CD14-positive monocyte (primary cell): ENCODE measurements at regions of chr11 and their contacts with region 1.

Region 1: GRCh38 chr11:2532704-2533586 is 88.1 kb downstream of the KCNQ1 start:
- DNase-seq: peak; percentile 80 to 89 (median 85)
- H3K4me3 ChIP-seq: peak overlapping the region in 2 of 3 experiments; percentile 25 to 71
- H3K4me3 Mint-ChIP-seq: peak overlapping the region; percentile 71 to 91
- H3K27ac ChIP-seq: peak overlapping the region; percentile 15 to 63
- H3K27ac Mint-ChIP-seq: peak overlapping the region; percentile 6 to 91 (median 89)
- H3K4me1 ChIP-seq: peaks cover 31 to 39% of the 10 kb centered on the region in 2 donors
- H3K4me1 Mint-ChIP-seq: peaks cover 38% of the 10 kb centered on the region
- H3K27me3 ChIP-seq: no peaks in the 10 kb centered on the region
- H3K27me3 Mint-ChIP-seq: peaks cover 3 to 16% (median 4%) of the 10 kb centered on the region in 3 donors
- CTCF ChIP-seq: peak; percentile 97

Region 2: GRCh38 chr11:2298795-2299761 is 233.9 kb before region 1 on chr11:
- intact Hi-C with region 1: loop called in 1 of 2 experiments (anchors 5 kb)
- DNase-seq: peak in 1 of 3 donors; percentile 8
- H3K4me3 ChIP-seq: peak overlapping the region in 1 of 3 experiments; percentile 52
- H3K4me3 Mint-ChIP-seq: peak overlapping the region in 1 of 2 donors; percentile 76
- H3K27ac ChIP-seq: peak overlapping the region in 1 of 2 donors; percentile 43
- H3K27ac Mint-ChIP-seq: peak overlapping the region in 4 of 7 donors; percentile 6 to 76 (median 30)
- H3K4me1 ChIP-seq: peaks cover 41 to 53% of the 10 kb centered on the region in 2 donors
- H3K4me1 Mint-ChIP-seq: peaks cover 59% of the 10 kb centered on the region
- H3K27me3 ChIP-seq: no peaks in the 10 kb centered on the region
- H3K27me3 Mint-ChIP-seq: peaks cover 0 to 3% (median 0%) of the 10 kb centered on the region in 3 donors
- CTCF ChIP-seq: no peak

Region 3: GRCh38 chr11:2428322-2428795 is 104.6 kb before region 1 on chr11:
- intact Hi-C with region 1: loop called (anchors 1 kb)
- DNase-seq: peak; percentile 72 to 80 (median 74)
- H3K4me3 ChIP-seq: no peak overlapping the region
- H3K4me3 Mint-ChIP-seq: no peak overlapping the region
- H3K27ac ChIP-seq: no peak overlapping the region
- H3K27ac Mint-ChIP-seq: no peak overlapping the region
- H3K4me1 ChIP-seq: no peaks in the 10 kb centered on the region
- H3K4me1 Mint-ChIP-seq: no peaks in the 10 kb centered on the region
- H3K27me3 ChIP-seq: no peaks in the 10 kb centered on the region
- H3K27me3 Mint-ChIP-seq: peaks cover 0 to 8% (median 7%) of the 10 kb centered on the region in 3 donors
- CTCF ChIP-seq: peak; percentile 91

Region 4: DNA sequence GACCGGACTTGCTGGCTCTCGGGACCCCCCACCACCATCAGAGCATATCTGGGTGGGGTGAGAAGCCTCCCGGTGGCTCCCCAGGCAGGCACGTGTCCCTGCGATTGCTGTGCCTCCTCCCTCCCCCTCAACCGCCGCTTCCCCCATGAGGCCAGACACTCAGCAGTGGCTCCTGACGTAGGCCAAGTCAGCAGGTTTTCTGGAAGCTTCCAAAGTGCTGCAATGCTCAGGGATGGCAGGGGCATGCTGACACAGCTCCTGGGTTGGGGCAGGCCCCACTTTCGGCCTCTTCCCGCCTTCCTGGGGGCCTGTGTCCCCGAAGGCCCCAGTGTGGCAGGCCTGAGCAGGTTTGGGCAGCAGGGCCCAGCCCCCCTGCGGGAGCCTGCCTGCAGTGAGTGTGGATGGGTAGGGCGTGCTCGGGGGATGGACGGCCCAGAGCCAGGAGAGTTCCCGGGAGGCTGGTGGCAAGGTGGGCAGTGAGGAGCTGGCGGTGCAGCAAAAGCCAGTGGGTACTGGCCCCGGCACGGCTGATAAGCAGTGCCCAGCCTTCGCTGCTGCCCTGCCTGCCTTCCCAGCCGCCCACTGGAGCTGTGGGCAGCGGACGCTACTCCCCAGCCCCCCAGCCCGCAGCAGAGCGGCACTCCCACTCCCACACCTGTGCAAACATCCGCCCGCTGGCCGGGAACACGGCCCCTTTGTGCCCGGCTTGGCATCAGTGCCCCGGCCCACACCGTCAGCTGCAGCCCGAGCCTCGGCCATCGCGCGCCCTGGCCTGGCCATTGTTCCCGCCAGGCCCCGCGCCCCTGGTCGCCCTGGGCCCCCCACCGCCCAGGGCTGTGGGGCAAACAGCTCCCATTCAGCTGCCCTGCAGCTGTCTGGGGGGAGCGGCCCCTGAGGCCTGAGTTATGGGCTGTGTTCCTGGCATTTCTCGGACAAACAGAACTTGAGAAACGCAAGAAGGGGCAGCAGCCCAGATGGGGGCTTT is 41.9 kb after region 1 on chr11:
- intact Hi-C with region 1: no loop called
- DNase-seq: no peak
- H3K4me3 ChIP-seq: no peak overlapping the region
- H3K4me3 Mint-ChIP-seq: no peak overlapping the region
- H3K27ac ChIP-seq: no peak overlapping the region
- H3K27ac Mint-ChIP-seq: no peak overlapping the region
- H3K4me1 ChIP-seq: no peaks in the 10 kb centered on the region
- H3K4me1 Mint-ChIP-seq: no peaks in the 10 kb centered on the region
- H3K27me3 ChIP-seq: no peaks in the 10 kb centered on the region
- H3K27me3 Mint-ChIP-seq: peaks cover 0 to 3% (median 0%) of the 10 kb centered on the region in 3 donors
- CTCF ChIP-seq: no peak

Region 5: DNA sequence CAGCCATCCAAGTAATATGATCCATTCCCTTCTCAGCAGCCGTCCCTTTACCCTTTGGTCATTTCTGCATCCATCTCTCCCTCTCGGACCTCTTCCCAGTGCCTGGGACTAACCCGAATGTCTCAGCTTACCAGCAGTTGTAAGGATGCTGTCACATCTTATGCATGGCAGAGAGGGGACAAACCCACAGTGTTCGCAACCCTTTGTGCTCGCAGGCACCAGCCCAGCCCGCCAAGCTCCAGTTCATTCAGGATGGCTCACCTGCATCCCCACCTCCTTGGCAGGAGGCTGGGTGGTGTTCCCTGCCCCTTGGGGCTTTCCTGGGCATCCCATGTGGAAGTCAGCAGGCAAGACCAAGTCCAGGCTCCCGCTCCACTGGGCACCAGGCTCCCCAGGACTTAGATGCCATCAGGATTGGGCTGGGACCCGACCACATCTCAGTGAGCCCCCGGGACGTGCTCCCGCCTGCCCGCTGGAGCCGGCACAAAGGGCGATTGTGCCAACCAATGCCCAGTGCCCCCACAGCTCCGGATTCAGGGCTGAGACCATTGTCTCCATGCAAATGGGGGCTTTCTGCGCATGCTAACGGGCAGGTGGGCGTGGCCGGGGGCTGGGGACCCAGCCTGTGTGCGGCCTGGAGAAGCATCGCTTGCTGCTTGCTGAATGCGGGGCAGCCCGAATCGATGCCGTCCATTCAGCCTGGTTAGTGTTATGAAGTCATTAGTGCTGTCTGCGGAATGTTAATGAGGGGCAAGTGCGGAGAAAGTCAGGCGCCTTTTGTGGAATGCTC is 58.2 kb after region 1 on chr11:
- intact Hi-C with region 1: no loop called
- DNase-seq: peak in 1 of 3 donors; percentile 1
- H3K4me3 ChIP-seq: no peak overlapping the region
- H3K4me3 Mint-ChIP-seq: no peak overlapping the region
- H3K27ac ChIP-seq: no peak overlapping the region
- H3K27ac Mint-ChIP-seq: no peak overlapping the region
- H3K4me1 ChIP-seq: no peaks in the 10 kb centered on the region
- H3K4me1 Mint-ChIP-seq: no peaks in the 10 kb centered on the region
- H3K27me3 ChIP-seq: no peaks in the 10 kb centered on the region
- H3K27me3 Mint-ChIP-seq: peaks cover 0 to 3% (median 0%) of the 10 kb centered on the region in 3 donors
- CTCF ChIP-seq: no peak

Region 6: DNA sequence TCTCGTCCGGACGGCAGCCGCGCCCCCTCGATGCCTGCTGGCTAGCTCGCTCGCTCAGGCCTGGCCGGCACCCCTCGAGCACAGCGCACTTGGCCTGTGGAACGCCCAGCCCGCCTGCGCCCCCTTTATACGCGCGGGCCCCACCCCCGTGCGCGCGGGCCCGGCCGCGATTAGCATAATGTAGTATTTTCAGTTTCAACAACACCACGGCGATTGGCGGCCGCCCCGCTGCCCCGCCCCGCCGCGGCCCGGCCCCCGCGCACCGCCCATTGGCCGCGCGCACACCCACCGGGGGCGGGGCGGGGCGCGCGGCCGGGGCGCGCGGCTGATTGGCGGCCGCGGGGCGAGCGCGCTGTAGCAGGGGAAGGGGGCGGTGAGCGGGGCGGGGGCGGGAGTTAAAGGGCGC is 352.7 kb after region 1 on chr11 and contains the start of gene CDKN1C:
- intact Hi-C with region 1: loop called (anchors 1 to 2 kb)
- DNase-seq: peak; percentile 60 to 75 (median 74)
- H3K4me3 ChIP-seq: peak within 1 kb of the TSS; percentile 59 to 89 (median 69)
- H3K4me3 Mint-ChIP-seq: peak within 1 kb of the TSS; percentile 92 to 97
- H3K27ac ChIP-seq: no peak within 1 kb of the TSS
- H3K27ac Mint-ChIP-seq: peak within 1 kb of the TSS in 5 of 7 donors; percentile 24 to 82 (median 79)
- H3K4me1 ChIP-seq: peaks cover 14 to 28% of the 10 kb centered on the region in 2 donors
- H3K4me1 Mint-ChIP-seq: peaks cover 16% of the 10 kb centered on the region
- H3K27me3 ChIP-seq: peaks cover 11 to 48% of the 10 kb centered on the region in 2 donors
- H3K27me3 Mint-ChIP-seq: peaks cover 37 to 66% (median 43%) of the 10 kb centered on the region in 3 donors
- CTCF ChIP-seq: no peak
- polyA plus RNA-seq, gene CDKN1C: 3.2 to 36.4 (median 4.7) TPM

Region 7: DNA sequence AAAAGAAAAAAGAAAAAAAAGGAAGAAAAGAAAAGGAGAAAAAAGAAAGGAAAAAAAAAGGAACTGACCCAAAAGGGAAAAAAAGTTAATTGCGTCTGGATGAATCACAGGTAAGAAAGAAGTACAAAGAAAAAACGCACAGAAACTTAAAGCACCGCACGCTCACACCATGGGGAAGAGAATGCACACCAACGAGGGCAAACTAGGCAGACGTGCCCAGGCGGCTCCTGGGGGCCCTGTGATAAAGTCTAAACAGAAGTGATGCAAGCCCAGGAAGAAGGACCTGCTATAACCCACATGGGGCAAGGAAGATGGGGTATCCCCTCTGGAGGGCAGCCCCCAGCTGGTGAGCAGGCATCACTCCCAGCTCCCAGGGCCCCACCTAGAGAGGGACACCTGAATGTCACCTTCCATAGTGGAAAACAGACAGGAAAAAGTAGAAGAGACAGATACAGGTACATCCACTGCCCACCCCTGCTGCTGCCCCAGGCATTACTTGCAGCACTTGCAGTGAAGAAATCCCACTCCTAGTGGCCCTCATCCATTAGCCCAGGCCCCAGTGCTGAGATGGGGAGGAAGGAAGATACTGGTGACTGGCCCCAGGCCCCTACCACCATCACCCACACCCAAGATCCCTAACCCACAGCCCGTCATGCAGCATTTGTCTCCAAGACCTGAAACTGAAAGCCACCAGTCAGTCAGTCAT is 430.3 kb after region 1 on chr11:
- intact Hi-C with region 1: loop called in 1 of 2 experiments (anchors 10 kb)
- DNase-seq: peak in 1 of 3 donors; percentile 22
- H3K4me3 ChIP-seq: no peak overlapping the region
- H3K4me3 Mint-ChIP-seq: no peak overlapping the region
- H3K27ac ChIP-seq: peak overlapping the region; percentile 29 to 52
- H3K27ac Mint-ChIP-seq: peak overlapping the region; percentile 56 to 89 (median 68)
- H3K4me1 ChIP-seq: peaks cover 30 to 42% of the 10 kb centered on the region in 2 donors
- H3K4me1 Mint-ChIP-seq: peaks cover 36% of the 10 kb centered on the region
- H3K27me3 ChIP-seq: no peaks in the 10 kb centered on the region
- H3K27me3 Mint-ChIP-seq: peaks cover 0 to 1% (median 0%) of the 10 kb centered on the region in 3 donors
- CTCF ChIP-seq: no peak

Region 8: DNA sequence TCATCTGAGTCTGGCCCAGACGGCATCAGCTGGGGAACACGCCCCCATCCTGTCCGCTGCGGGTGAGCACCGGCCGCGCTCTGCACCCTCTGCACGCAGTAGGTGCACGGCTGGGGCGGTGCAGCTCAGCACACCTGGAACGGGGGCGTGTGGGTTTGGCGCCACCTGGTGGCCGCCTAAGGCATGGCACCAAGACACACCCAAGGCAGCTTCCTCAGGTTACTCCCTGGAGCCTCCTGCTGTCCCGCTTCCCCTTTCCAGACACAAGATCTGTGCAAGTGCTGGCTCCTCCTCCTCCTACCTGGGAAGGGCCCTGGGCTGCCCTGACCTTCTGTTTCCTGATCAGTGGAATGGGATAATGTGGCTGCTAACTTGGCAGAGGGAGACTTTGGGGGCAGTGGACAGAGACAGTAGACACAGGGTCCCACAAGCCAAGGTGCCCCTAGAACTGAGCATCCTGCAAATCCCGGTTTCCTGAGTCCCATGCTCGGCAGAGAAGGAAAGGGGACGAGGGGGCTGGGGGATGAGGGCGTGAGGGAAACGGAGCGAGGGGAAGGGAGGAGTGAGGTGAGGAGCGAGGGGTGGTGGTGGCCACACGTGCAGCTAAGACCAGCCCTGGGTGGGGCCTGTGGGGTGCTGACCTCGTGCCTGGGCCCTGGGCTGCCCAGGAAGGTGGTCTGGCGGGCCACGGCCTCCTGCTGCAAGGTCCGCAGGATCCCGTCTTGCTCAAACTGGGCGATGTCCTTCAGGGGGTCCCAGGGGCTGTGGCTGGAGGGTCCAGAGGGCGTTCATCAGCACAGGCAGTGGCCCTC is 559.1 kb after region 1 on chr11:
- intact Hi-C with region 1: loop called (anchors 5 kb)
- DNase-seq: peak; percentile 56 to 78 (median 68)
- H3K4me3 ChIP-seq: no peak overlapping the region
- H3K4me3 Mint-ChIP-seq: no peak overlapping the region
- H3K27ac ChIP-seq: no peak overlapping the region
- H3K27ac Mint-ChIP-seq: peak overlapping the region in 1 of 7 donors; percentile 71
- H3K4me1 ChIP-seq: peaks cover 4 to 6% of the 10 kb centered on the region in 2 donors
- H3K4me1 Mint-ChIP-seq: peaks cover 10% of the 10 kb centered on the region
- H3K27me3 ChIP-seq: no peaks in the 10 kb centered on the region
- H3K27me3 Mint-ChIP-seq: no peaks in the 10 kb centered on the region
- CTCF ChIP-seq: peak; percentile 100